Endothelial cell of umbilical vein (primary cell): ENCODE measurements at regions of chr6 and their contacts with region 1.

Region 1: GRCh38 chr6:93678841-93679454 is 259.6 kb upstream of the EPHA7 start:
- DNase-seq: peak; percentile 11
- H3K4me3 ChIP-seq: no peak overlapping the region
- H3K27ac ChIP-seq: no peak overlapping the region
- H3K4me1 ChIP-seq: peaks cover 28% of the 10 kb centered on the region
- H3K27me3 ChIP-seq: no peaks in the 10 kb centered on the region
- CTCF ChIP-seq: no peak
- POLR2A ChIP-seq: no peak

Region 2: DNA sequence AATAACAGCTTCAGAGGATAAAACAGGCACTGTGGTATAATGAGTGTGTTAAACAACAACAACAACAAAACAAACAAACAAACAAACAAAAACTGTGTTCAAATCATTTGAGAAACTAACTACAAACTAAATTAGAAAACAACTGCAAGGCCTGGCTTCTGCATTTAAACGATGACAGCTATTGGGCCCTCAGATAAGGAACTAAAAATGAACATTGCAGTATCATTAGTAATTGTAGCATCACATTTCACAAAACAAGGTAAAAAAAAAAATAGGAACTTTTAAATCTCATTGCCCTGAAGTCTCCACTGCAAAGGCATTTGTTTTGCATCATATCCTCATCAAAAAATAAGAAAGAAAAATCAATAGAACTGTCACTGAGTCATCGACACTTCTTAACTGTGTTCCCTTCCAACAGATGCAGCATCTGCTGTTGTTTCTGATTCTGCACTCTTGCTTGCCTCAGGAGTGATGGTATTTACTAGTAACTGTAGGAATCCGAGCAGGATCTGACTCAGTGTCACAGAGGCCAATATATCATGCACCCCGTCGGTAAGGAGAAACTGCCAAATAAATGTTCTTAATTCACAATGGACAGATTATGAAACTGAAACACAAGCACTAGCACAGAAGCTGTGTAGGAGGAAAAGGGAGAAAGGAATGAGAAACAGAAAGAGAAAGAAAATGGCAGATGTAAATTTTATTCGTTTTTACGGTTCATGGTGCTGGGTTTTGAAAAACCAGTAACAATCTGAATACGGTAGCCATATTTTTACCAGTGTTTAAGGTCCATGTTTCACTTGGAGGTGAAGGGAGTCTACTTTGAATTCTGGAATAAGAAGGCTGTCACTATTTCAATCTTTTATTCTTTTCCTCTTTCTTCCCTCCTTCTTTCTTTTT is 106.1 kb after region 1 on chr6:
- CTCF ChIA-PET with region 1: no interaction called
- POLR2A ChIA-PET with region 1: no interaction called
- dilution Hi-C with region 1: no loop called
- intact Hi-C with region 1: loop called (anchors 5 kb)
- DNase-seq: peak; percentile 49
- H3K4me3 ChIP-seq: no peak overlapping the region
- H3K27ac ChIP-seq: peak overlapping the region; percentile 2
- H3K4me1 ChIP-seq: peaks cover 3% of the 10 kb centered on the region
- H3K27me3 ChIP-seq: no peaks in the 10 kb centered on the region
- CTCF ChIP-seq: no peak
- POLR2A ChIP-seq: no peak